Activated CD4-positive, alpha-beta T cell treated with anti-CD3 and anti-CD28 coated beads, Interleukin-2, amount 10 ng/mL, durations not matched to agents 24 days and 14 days (primary cell): ENCODE measurements at regions of chr19 and their contacts with region 1.

Region 1: GRCh38 chr19:49570138-49570856 is 10.1 kb downstream of the NOSIP start:
- DNase-seq: peak; percentile 93
- H3K4me3 Mint-ChIP-seq: peak overlapping the region; percentile 56
- H3K27ac Mint-ChIP-seq: peak overlapping the region; percentile 77
- H3K4me1 Mint-ChIP-seq: peaks cover 50% of the 10 kb centered on the region
- H3K27me3 Mint-ChIP-seq: no peaks in the 10 kb centered on the region

Region 2: GRCh38 chr19:49506575-49507105 is 63.7 kb before region 1 on chr19:
- intact Hi-C with region 1: loop called (anchors 1 kb)
- DNase-seq: peak; percentile 94
- H3K4me3 Mint-ChIP-seq: no peak overlapping the region
- H3K27ac Mint-ChIP-seq: no peak overlapping the region
- H3K4me1 Mint-ChIP-seq: peaks cover 25% of the 10 kb centered on the region
- H3K27me3 Mint-ChIP-seq: no peaks in the 10 kb centered on the region

Region 3: GRCh38 chr19:49528211-49528771 is 42.0 kb before region 1 on chr19:
- intact Hi-C with region 1: loop called (anchors 1 kb)
- DNase-seq: no peak
- H3K4me3 Mint-ChIP-seq: peak overlapping the region; percentile 81
- H3K27ac Mint-ChIP-seq: peak overlapping the region; percentile 29
- H3K4me1 Mint-ChIP-seq: peaks cover 20% of the 10 kb centered on the region
- H3K27me3 Mint-ChIP-seq: peaks cover 4% of the 10 kb centered on the region

Region 4: DNA sequence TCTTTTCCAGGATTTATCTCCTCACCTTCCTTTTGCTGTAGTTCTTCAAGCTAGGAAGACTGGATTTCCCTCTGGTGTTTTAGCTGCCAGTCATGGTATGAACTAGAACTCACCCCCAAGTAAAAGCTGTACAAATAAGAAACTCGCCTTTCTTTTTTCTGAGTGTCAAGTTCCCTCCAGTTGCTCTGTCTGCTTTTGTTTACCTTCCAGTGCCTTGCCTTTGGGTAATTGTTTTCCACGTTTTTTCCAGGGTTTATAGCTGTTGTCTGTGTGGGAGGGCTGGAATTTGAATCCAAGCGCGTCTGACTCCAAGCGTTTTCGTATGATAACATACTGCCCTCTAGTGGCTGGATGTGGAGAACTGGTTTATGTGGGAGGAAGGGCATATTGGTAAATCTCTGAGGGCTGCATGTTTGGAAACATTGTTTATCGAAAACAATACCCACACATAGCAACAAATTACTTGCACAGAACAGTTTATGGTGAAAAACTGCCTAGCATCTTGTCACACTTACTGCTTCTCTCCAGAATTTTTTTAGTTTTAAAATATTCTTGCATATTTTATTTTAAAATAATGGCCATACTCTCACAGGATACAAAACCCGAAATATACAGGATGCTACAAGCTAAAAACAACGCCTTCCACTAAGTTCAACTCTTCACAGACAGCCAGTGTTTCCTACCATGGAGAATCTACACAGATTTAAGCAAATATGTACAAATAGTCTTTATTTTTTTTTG is 23.3 kb before region 1 on chr19:
- intact Hi-C with region 1: loop called (anchors 1 kb)
- DNase-seq: peak; percentile 93
- H3K4me3 Mint-ChIP-seq: peak overlapping the region; percentile 78
- H3K27ac Mint-ChIP-seq: peak overlapping the region; percentile 71
- H3K4me1 Mint-ChIP-seq: peaks cover 29% of the 10 kb centered on the region
- H3K27me3 Mint-ChIP-seq: no peaks in the 10 kb centered on the region

Region 5: GRCh38 chr19:49555600-49556411 is 14.5 kb before region 1 on chr19:
- intact Hi-C with region 1: loop called (anchors 1 kb)
- DNase-seq: peak; percentile 93
- H3K4me3 Mint-ChIP-seq: peak overlapping the region; percentile 48
- H3K27ac Mint-ChIP-seq: peak overlapping the region; percentile 100
- H3K4me1 Mint-ChIP-seq: peaks cover 70% of the 10 kb centered on the region
- H3K27me3 Mint-ChIP-seq: no peaks in the 10 kb centered on the region

Region 6: DNA sequence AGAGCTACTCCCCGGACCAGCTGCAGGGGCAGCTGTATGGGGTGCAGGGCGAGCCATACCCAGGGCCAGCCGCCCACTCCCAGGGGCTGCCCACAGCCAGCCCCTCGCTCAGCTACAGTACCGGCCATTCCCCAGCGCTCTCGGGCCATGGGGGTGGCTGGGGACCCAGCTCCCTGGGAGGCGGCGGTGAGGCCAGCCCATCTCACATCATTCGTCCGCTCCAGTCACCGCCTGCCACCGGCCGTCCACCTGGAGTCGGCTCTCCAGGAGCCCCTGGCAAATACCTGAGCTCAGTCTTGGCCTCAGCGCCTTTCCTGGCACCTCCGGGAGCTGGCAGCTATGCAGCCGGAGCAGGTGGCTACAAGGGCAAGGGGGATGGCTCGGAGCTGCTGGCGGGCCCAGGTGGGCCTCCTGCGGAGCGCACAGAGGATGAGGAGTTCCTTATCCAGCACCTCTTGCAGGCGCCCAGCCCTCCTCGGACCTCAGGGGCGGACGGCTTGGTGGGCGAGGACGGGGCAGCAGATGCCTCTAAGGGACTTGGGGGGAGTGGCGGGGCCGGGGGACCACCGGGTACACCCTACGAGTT is 25.6 kb after region 1 on chr19:
- intact Hi-C with region 1: no loop called
- DNase-seq: no peak
- H3K4me3 Mint-ChIP-seq: no peak overlapping the region
- H3K27ac Mint-ChIP-seq: no peak overlapping the region
- H3K4me1 Mint-ChIP-seq: peaks cover 22% of the 10 kb centered on the region
- H3K27me3 Mint-ChIP-seq: no peaks in the 10 kb centered on the region